Spleen (tissue), 13 donors: ENCODE measurements at regions of chr11 and their contacts with region 1.

Region 1: DNA sequence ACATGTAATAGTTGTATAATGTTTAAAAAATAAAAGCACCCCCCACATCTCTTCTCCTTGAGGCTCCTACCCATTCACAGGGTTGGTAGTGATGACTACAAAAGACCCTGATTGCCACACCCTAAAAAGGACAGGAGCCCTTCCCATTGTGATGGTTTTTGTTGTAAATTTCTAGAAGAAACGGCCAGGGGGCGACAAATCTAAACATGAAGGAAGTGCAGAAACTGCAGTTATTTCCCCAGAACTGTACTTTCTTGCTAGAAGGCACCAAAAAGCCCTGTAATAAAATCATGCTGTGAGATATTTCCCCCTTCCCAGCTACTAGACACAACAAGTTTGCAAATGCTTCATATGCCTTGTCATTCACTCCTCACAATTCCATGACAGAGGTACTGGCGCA is 10.8 kb downstream of the PRR5L start:
- DNase-seq: no peak
- H3K4me3 ChIP-seq: no peak overlapping the region
- H3K27ac ChIP-seq: peak overlapping the region in 2 of 8 donors; percentile 44 to 47
- H3K4me1 ChIP-seq: peaks cover 0 to 18% (median 3%) of the 10 kb centered on the region in 6 donors
- H3K27me3 ChIP-seq: no peaks in the 10 kb centered on the region
- CTCF ChIP-seq: peak in 7 of 11 experiments; percentile 21 to 57 (median 52)
- POLR2A ChIP-seq: no peak

Region 2: DNA sequence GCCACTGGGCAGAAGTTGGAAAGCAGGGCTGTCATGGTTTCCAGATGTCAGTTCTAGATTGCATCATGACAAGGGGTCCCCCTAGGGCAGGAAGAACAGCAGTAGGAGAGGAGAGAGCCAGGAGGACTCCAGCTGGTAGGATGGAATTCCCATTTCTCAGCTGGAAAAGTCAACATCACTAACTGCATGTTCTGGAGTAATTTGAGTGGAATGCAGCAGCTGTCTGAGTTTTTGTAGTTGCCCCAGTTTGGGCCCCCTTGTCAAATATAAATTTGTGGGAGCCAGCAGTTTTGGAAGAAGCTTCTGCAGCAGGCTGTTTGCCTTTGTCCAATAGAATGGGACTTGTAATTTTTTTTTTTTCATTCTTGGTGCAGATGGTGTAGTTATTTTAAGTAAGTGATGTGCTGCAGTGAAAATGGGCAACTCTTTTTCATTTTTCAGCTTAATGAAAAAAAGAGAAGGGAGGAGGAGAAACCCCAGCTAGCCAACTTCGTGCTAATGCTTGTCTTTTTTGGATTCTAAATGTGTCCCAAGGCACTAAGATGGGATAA is 276.1 kb before region 1 on chr11:
- intact Hi-C with region 1: no loop called
- DNase-seq: no peak
- H3K4me3 ChIP-seq: no peak overlapping the region
- H3K27ac ChIP-seq: peak overlapping the region in 1 of 8 donors; percentile 21
- H3K4me1 ChIP-seq: no peaks in the 10 kb centered on the region
- H3K27me3 ChIP-seq: no peaks in the 10 kb centered on the region
- CTCF ChIP-seq: no peak
- POLR2A ChIP-seq: no peak

Region 3: DNA sequence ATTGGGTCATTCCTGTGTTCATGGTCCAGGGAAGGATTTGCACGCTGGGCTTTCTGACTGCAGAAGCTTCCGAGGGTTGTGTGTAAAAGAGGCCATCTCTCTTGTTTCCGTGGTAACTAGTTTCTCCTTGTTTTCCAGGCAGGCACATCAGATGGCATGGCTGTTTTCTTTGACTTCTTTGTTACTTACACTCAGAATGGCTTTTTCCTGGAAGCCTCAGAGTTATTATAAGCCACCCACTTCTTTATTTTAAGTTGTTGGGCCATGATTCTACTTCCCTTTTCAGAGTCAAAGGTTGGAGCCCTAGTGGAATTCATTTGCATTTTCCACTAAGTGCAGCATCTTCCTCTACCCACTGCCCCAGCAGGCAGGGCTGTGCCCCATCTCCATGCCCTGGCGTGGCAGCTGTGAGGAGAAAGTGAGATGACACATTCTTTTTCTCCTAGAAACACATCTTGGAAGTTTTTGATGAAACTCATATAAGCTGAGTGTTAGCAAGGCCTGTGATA is 84.1 kb after region 1 on chr11:
- intact Hi-C with region 1: loop called (anchors 10 kb)
- DNase-seq: no peak
- H3K4me3 ChIP-seq: peak overlapping the region in 1 of 8 donors; percentile 6
- H3K27ac ChIP-seq: peak overlapping the region; percentile 1 to 58 (median 11)
- H3K4me1 ChIP-seq: peaks cover 43 to 100% (median 75%) of the 10 kb centered on the region in 6 donors
- H3K27me3 ChIP-seq: no peaks in the 10 kb centered on the region
- CTCF ChIP-seq: peak in 6 of 11 experiments; percentile 14 to 46 (median 24)
- POLR2A ChIP-seq: no peak